ENCODE measurements at regions of chr12 and their contacts with region 1.

Region 1: DNA sequence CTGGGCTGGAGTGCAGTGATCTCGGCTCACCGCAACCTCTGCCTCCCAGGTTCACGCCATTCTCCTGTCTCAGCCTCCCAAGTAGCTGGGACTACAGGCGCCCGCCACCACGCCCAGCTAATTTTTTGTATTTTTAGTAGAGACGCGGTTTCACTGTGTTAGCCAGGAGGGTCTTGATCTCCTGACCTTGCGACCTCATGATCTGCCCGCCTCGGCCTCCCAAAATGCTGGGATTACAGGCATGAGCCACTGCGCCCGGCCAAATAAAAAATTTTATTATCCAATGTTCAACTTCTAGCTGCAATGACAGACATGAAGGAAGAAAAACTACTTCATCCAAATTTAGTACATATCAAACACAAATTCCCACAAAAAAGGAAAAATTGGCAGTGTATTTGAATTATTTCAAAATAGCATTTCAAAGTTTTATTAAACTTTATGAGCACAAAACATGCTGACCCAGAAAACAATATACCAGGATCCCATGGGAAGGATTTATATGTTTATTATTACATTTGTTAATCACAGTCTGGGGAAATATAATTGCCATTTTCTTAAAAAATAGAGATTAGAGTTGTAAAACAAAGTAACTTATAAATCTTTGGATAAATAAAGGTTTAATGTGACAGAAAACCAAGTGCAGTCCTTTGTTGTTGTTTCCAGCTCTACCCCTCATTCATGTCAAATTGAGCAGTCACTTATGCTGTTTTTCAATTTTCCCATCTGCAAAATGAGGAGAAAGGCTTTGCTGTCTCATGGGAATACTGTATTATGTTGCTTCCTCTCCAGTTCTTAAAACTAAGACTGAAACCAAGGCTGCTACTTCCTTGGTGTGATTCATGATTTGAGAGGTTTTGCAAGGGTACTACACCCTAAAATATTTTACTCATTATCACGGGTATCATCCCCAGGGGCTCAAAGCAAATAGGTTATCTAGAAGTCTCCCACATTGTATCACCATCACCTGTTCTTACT is 155.2 kb upstream of the AVPR1A start:
- DNase-seq: peak; percentile 86
- H3K4me3 ChIP-seq: no peak overlapping the region
- H3K27ac ChIP-seq: no peak overlapping the region
- H3K4me1 ChIP-seq: peaks cover 29% of the 10 kb centered on the region
- H3K27me3 ChIP-seq: peaks cover 6% of the 10 kb centered on the region
- CTCF ChIP-seq: no peak

Region 2: GRCh38 chr12:63410197-63410596 is 104.0 kb after region 1 on chr12:
- CTCF ChIA-PET with region 1: no interaction called
- POLR2A ChIA-PET with region 1: no interaction called
- intact Hi-C with region 1: loop called (anchors 5 kb)
- DNase-seq: peak; percentile 93
- H3K4me3 ChIP-seq: peak overlapping the region; percentile 2
- H3K27ac ChIP-seq: peak overlapping the region; percentile 82
- H3K4me1 ChIP-seq: peaks cover 39% of the 10 kb centered on the region
- H3K27me3 ChIP-seq: no peaks in the 10 kb centered on the region
- CTCF ChIP-seq: no peak

Measured in A673 (cell line).